ACHN (cell line): ENCODE measurements at regions of chr3 and their contacts with region 1.

Region 1: DNA sequence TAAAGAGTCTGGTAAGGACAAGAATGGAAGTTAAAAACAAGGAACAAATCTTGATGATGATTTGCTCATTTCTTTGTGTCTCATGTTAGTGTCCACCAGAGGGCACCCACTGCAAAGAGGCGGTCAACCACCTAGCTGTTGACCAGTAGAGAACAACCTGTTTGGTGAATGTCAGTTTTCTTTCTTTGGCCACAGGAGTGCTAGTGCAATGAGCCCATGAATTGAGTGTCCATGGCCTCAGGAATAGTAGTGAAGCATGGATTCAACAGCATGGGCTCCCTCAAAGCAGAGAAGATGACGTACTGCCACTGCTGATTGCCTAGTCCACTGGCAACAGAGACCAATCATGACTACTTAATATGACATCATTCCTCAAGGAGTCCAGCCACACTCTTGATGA is 10.7 kb upstream of the CNTN6 start:
- DNase-seq: peak; percentile 71

Region 2: DNA sequence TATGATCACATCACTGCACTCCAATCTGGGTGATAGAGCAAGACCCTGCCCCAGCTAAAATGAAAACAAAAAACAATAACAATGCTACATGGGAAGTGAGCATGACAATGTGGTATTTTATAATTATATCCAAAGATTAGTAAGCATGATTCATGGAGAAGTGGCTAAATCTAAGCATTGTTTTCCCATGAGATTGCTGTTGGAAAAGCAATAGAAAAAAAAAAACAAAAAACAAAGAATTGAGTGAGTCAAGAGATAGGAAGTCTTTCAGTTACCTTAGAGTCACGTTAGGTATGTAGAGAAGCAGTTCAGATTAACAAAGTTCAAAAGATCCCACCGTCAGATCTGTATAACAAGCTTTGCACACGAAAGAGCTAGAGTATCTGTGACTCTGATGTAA is 199.6 kb before region 1 on chr3:
- in situ Hi-C with region 1: no loop called
- DNase-seq: no peak

Region 3: DNA sequence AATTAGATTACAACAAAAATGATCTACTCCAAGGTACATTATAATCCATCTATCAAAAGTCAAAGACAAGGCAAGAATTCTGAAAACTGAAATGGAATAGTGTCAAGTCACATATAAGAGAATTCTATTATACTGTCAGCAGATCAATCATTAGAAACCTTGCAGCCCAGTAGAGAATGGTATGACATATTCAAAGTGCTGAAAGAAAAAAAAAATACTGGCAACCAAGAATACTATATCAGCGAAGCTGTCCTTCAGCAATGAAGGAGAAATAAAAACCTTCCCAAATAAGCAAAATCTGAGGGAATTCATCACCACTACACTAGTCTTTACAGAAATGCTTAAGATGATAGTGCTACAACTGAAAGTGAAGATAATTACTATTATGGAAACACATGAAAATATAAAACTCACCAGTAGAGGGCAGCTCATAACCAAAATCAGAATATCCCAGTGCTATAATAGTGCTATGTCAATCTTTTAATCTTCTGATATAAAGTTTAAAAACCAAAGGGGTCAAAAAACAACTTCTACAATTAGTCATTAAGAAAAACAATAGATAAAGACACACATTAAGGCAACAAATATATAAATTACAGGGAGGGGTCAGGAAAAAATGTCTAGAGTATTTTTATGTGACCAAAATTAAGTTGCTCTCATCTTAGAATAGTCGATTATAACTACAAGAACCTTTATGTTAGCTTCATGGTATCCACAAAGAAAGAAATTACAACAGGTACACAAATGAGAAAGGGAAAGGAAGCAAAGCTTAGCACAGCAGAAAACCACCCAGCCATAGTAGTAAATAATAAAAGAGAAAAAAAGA is 179.9 kb before region 1 on chr3:
- in situ Hi-C with region 1: loop called (anchors 25 kb)
- DNase-seq: peak; percentile 36

Region 4: DNA sequence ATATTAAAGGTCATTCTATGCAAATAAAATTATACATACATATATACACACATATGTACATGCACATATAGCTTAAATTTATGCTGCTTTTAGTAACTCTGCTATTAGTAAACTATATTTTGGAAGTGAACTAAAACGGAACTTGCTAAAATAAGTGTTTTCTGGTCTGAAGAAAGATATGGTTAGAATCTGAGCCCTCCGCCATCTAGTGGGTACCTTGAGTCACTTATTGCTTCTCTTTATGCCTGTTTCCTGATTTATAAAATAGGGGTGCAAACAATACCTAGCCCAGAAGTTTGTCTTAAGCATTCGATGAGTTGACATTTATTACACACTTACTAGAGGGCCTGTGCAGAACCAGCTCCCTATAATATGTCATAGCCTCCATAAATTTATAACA is 266.4 kb after region 1 on chr3:
- in situ Hi-C with region 1: no loop called
- DNase-seq: peak; percentile 27